Activated CD4-positive, alpha-beta T cell treated with anti-CD3 and anti-CD28 coated beads for 36 hours (primary cell): ENCODE measurements at regions of chr11 and their contacts with region 1.

Region 1: DNA sequence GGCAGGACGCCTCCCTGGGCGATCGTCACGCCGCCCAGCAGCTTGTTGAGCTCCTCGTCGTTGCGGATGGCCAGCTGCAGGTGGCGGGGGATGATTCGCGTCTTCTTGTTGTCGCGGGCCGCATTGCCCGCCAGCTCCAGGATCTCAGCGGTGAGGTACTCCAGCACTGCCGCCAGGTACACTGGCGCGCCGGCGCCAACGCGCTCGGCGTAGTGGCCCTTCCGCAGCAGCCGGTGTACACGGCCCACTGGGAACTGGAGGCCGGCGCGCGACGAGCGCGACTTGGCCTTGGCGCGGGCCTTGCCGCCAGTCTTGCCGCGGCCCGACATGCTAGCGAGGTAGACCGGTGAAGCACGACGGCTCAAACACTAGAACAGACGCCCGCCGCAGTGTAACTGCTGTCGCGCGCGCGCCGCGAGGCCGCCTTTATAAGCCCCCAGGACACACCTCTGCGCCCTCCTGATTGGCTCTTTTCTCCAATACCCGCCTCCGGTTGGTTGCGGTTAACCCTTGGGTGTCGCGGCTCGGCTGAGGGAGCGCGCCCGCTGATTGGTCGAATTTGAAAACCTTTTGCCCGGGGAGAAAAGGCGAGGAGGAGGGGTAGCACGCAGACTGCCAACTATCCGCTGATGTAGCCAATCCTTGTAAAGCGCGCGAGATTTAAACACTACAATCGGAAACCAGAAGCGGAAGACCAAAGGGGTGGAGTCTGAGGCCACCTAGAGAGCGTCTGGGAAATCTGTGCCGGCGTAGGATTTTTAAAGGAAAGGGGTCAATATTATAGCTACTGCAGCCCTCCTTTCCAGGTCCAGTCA is 6.4 kb downstream of the DPAGT1 start:
- DNase-seq: peak; percentile 100
- ATAC-seq: peak; percentile 90
- H3K4me3 Mint-ChIP-seq: peak overlapping the region; percentile 93
- H3K27ac Mint-ChIP-seq: peak overlapping the region; percentile 94
- H3K4me1 Mint-ChIP-seq: peaks cover 50% of the 10 kb centered on the region
- H3K27me3 Mint-ChIP-seq: no peaks in the 10 kb centered on the region

Region 2: GRCh38 chr11:119018074-119018938 is 77.0 kb before region 1 on chr11 and contains the starts of genes RPS25 and TRAPPC4:
- CTCF ChIA-PET with region 1: interaction called, 5 read pairs
- POLR2A ChIA-PET with region 1: interaction called, 3 read pairs
- intact Hi-C with region 1: loop called (anchors 1 kb)
- DNase-seq: peak; percentile 98
- ATAC-seq: peak; percentile 92
- H3K4me3 Mint-ChIP-seq: peak within 1 kb of the TSS; percentile 99
- H3K27ac Mint-ChIP-seq: peak within 1 kb of the TSS; percentile 99
- H3K4me1 Mint-ChIP-seq: peaks cover 53% of the 10 kb centered on the region
- H3K27me3 Mint-ChIP-seq: no peaks in the 10 kb centered on the region
- total RNA-seq, gene RPS25: 1,590 to 1,820 TPM
- total RNA-seq, gene TRAPPC4: 62.2 to 81.9 TPM

Region 3: GRCh38 chr11:119057000-119057769 is 38.1 kb before region 1 on chr11 and contains the start of gene HYOU1:
- CTCF ChIA-PET with region 1: interaction called, 4 read pairs
- POLR2A ChIA-PET with region 1: no interaction called
- intact Hi-C with region 1: loop called (anchors 1 kb)
- DNase-seq: peak; percentile 100
- ATAC-seq: peak; percentile 96
- H3K4me3 Mint-ChIP-seq: peak within 1 kb of the TSS; percentile 82
- H3K27ac Mint-ChIP-seq: peak within 1 kb of the TSS; percentile 94
- H3K4me1 Mint-ChIP-seq: peaks cover 34% of the 10 kb centered on the region
- H3K27me3 Mint-ChIP-seq: no peaks in the 10 kb centered on the region
- total RNA-seq, gene HYOU1: 104 to 114 TPM

Region 4: GRCh38 chr11:119084663-119085436 is 10.4 kb before region 1 on chr11 and contains the start of gene HMBS:
- CTCF ChIA-PET with region 1: interaction called, 8 read pairs
- POLR2A ChIA-PET with region 1: interaction called, 28 read pairs
- intact Hi-C with region 1: loop called (anchors 1 kb)
- DNase-seq: peak; percentile 96
- ATAC-seq: peak; percentile 94
- H3K4me3 Mint-ChIP-seq: peak within 1 kb of the TSS; percentile 97
- H3K27ac Mint-ChIP-seq: peak within 1 kb of the TSS; percentile 92
- H3K4me1 Mint-ChIP-seq: peaks cover 22% of the 10 kb centered on the region
- H3K27me3 Mint-ChIP-seq: no peaks in the 10 kb centered on the region
- total RNA-seq, gene HMBS: 39.8 to 41.8 TPM

Region 5: GRCh38 chr11:119121008-119121810 is 25.9 kb after region 1 on chr11 and contains the start of gene HINFP:
- CTCF ChIA-PET with region 1: interaction called, 4 read pairs
- POLR2A ChIA-PET with region 1: interaction called, 6 read pairs
- intact Hi-C with region 1: loop called (anchors 1 kb)
- DNase-seq: peak; percentile 100
- ATAC-seq: peak; percentile 98
- H3K4me3 Mint-ChIP-seq: peak within 1 kb of the TSS; percentile 94
- H3K27ac Mint-ChIP-seq: peak within 1 kb of the TSS; percentile 91
- H3K4me1 Mint-ChIP-seq: peaks cover 25% of the 10 kb centered on the region
- H3K27me3 Mint-ChIP-seq: no peaks in the 10 kb centered on the region
- total RNA-seq, gene HINFP: 24.0 to 27.2 TPM

Region 6: GRCh38 chr11:119196833-119197483 is 101.7 kb after region 1 on chr11:
- CTCF ChIA-PET with region 1: interaction called, 3 read pairs
- POLR2A ChIA-PET with region 1: no interaction called
- intact Hi-C with region 1: loop called in 1 of 2 experiments (anchors 2 kb)
- DNase-seq: peak; percentile 80
- ATAC-seq: peak; percentile 97
- H3K4me3 Mint-ChIP-seq: no peak overlapping the region
- H3K27ac Mint-ChIP-seq: no peak overlapping the region
- H3K4me1 Mint-ChIP-seq: peaks cover 2% of the 10 kb centered on the region
- H3K27me3 Mint-ChIP-seq: no peaks in the 10 kb centered on the region